ENCODE measurements at regions of chr5 and their contacts with region 1.

Region 1: DNA sequence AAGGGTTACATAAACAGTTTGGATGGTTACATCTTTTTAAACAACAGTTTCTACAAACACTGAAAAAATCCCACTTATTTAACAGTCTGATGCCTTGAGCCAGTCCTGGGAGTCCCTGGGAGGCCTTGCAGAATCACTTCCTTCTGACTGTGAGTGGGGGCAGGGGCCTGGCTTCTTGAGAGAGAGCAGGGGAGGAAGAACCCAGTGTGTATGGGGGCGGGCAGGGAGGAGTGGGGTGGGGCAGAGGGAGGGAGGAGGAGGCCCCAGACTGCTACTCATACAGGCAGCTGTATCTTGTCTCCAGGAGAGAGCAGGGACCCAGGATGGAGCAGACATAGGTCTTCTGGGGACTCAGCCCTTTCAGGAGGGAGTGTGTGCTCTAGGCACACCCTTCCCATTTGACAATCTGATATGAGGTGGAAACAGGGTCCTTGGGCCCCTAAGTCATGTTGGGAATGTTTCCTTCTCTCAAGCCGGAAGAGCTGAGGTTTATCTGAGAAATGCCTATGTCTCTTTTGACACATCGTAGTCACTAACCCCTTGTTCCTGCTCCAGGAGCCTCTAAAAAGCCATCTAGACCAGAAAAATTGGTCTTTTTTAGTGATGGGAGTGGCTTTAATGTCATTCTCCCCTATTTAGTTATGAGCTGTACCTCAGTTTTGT is 52.8 kb downstream of the IRF1 start:
- DNase-seq: peak; percentile 65
- ATAC-seq: peak; percentile 98
- H3K4me3 Mint-ChIP-seq: peak overlapping the region; percentile 66
- H3K27ac Mint-ChIP-seq: peak overlapping the region; percentile 86
- H3K4me1 Mint-ChIP-seq: peaks cover 73% of the 10 kb centered on the region
- H3K27me3 Mint-ChIP-seq: no peaks in the 10 kb centered on the region

Region 2: DNA sequence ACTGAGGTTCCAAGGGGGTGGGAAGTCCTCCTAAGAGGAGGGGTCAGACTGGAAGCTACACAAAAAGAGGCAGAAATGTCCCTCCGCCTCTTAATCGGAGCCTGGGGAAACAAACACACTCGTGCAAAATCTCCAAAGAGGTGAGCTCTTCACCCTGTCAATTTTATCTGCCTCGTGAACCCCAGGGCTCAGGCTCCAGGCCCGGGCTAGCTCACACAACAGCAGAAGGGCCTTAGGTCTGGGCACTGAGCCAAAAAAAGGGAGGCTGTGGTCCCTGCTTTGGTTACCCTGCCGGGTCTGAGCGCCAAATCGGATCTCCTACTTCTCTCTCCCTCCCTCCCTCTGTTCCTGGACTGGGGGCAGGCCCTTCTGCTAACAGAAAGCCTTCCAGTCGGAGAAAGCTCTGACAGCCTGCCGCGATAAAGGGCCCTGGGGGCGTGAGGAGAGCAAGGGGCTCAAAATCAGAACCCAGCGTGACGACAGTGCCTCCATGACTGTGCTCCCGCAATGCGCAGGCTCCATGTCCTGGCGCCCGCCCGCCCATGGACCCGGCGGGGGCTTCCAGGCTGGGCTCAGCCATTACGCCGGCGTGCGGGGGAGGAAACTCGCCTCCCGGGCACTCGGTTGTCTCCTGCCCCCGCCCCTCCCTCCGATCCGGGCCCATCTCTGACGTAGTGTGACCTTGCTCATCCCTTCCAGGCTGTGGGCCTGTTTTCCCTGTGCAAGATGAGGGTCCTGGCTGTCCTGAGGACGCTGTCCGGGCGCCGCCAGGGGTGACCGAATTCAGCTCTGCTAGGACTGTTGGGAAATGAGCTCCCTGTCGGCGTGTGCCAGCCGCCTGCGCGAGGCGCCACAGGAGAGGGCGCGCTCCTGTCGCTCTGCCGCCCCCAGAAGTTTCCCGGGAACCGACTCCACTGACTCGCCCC is 144.4 kb before region 1 on chr5:
- POLR2A ChIA-PET with region 1: no interaction called
- DNase-seq: peak; percentile 75
- ATAC-seq: peak; percentile 56
- H3K4me3 Mint-ChIP-seq: peak overlapping the region; percentile 91
- H3K27ac Mint-ChIP-seq: peak overlapping the region; percentile 60
- H3K4me1 Mint-ChIP-seq: peaks cover 17% of the 10 kb centered on the region
- H3K27me3 Mint-ChIP-seq: peaks cover 6% of the 10 kb centered on the region

Region 3: GRCh38 chr5:132466433-132467286 is 28.9 kb after region 1 on chr5:
- POLR2A ChIA-PET with region 1: interaction called, 43 read pairs
- DNase-seq: peak; percentile 79
- ATAC-seq: peak; percentile 80
- H3K4me3 Mint-ChIP-seq: peak overlapping the region; percentile 81
- H3K27ac Mint-ChIP-seq: peak overlapping the region; percentile 85
- H3K4me1 Mint-ChIP-seq: peaks cover 85% of the 10 kb centered on the region
- H3K27me3 Mint-ChIP-seq: no peaks in the 10 kb centered on the region

Region 4: DNA sequence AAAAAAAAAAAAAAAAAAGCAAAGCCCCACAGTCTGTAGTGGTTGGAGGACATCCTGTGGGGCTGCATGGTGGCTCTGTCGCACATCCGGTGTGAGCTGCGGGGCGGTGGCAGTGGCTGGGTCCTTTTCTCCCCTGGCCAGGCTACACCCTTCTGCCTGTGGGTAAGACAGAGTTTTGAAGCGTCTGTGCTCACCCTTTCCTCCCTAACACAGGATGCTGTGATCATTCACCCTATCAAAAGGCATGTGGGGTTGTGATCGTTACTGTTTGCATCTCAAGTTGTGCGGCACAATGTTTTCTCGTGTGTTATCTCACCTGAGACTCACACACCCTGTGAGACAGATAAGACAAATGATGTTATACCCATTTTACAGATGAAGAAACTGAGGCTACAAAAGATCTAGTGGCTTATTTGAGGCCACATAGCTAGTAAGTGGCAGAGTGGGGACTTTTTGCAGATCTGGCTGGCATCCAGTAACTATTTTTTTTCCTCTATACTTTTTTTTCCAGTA is 35.3 kb after region 1 on chr5:
- POLR2A ChIA-PET with region 1: interaction called, 45 read pairs
- DNase-seq: peak; percentile 84
- ATAC-seq: peak; percentile 97
- H3K4me3 Mint-ChIP-seq: peak overlapping the region; percentile 55
- H3K27ac Mint-ChIP-seq: peak overlapping the region; percentile 88
- H3K4me1 Mint-ChIP-seq: peaks cover 73% of the 10 kb centered on the region
- H3K27me3 Mint-ChIP-seq: no peaks in the 10 kb centered on the region

Region 5: GRCh38 chr5:132490486-132491367 is 53.0 kb after region 1 on chr5 and contains the start of gene IRF1:
- POLR2A ChIA-PET with region 1: interaction called, 36 read pairs
- DNase-seq: peak; percentile 99
- ATAC-seq: peak; percentile 78
- H3K4me3 Mint-ChIP-seq: peak within 1 kb of the TSS; percentile 98
- H3K27ac Mint-ChIP-seq: peak within 1 kb of the TSS; percentile 92
- H3K4me1 Mint-ChIP-seq: peaks cover 63% of the 10 kb centered on the region
- H3K27me3 Mint-ChIP-seq: no peaks in the 10 kb centered on the region
- total RNA-seq, gene IRF1: 228 to 238 TPM